ENCODE measurements at regions of chr3 and their contacts with region 1.

Region 1: GRCh38 chr3:196192036-196192523 is 19.1 kb downstream of the ZDHHC19 start:
- DNase-seq: peak in 1 of 5 donors; percentile 62
- ATAC-seq: no peak
- H3K4me3 ChIP-seq: no peak overlapping the region
- H3K27ac ChIP-seq: peak overlapping the region in 10 of 12 donors; percentile 24 to 93 (median 77)
- H3K4me1 ChIP-seq: peaks cover 0 to 41% (median 12%) of the 10 kb centered on the region in 12 donors
- H3K27me3 ChIP-seq: no peaks in the 10 kb centered on the region
- CTCF ChIP-seq: no peak
- POLR2A ChIP-seq: no peak

Region 2: DNA sequence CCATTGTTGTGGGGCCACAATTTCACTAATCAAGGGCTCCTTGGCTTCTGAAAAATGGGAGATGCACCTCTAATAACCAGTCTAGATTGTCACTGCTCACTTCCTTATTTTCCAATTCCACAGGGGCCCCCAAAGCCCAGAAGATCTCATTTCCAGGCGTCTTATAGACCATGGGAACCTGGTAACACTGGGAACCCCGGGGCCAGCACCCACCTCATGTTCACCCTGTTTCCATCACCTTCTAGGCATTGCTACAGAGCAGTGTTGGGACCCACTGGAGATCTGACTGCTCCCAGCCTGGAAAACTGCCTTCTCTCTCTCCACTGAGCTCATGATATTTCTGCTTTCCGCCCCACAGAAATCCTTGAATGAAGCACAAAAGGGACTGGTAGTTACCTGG is 171.7 kb before region 1 on chr3:
- intact Hi-C with region 1: loop called in 3 of 10 experiments (anchors 5 to 10 kb)
- DNase-seq: no peak
- ATAC-seq: no peak
- H3K4me3 ChIP-seq: no peak overlapping the region
- H3K27ac ChIP-seq: no peak overlapping the region
- H3K4me1 ChIP-seq: no peaks in the 10 kb centered on the region
- H3K27me3 ChIP-seq: no peaks in the 10 kb centered on the region
- CTCF ChIP-seq: no peak
- POLR2A ChIP-seq: no peak

Region 3: DNA sequence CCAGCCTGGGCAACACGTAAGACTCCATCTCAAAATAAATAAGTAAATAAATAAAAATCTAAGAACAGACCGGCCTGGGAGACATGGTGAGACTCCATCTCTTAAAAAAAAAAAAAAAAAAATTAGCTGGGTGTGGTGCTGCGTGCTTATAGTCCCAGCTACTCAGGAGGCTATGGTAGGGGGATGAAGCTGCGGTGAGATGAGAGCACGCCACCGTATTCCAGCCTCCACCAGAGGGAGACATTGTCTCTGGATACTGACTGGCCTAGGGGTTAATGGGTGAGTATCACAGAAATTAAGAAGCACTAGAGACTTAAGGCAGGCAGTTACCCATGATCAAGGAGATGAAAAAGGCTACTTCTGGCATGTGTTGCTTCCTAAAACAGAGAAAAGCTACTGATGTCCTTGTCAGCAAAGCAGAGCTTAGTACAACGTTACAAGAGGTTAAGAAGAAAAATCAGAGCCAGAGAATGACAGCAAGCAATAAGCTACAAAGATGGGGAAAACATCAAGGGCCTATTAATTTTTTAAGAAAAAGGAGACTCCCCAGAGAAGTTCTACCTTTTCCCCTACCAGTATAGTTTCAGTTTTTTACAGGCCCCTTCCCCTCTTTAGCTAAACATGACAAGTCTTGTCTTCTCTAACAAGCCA is 118.8 kb before region 1 on chr3:
- intact Hi-C with region 1: loop called (anchors 1 to 5 kb)
- DNase-seq: peak in 3 of 5 donors; percentile 47 to 60 (median 49)
- ATAC-seq: peak; percentile 80 to 94 (median 90)
- H3K4me3 ChIP-seq: no peak overlapping the region
- H3K27ac ChIP-seq: no peak overlapping the region
- H3K4me1 ChIP-seq: peaks cover 0 to 23% (median 0%) of the 10 kb centered on the region in 12 donors
- H3K27me3 ChIP-seq: no peaks in the 10 kb centered on the region
- CTCF ChIP-seq: peak; percentile 48 to 77 (median 75)
- POLR2A ChIP-seq: no peak

Region 4: DNA sequence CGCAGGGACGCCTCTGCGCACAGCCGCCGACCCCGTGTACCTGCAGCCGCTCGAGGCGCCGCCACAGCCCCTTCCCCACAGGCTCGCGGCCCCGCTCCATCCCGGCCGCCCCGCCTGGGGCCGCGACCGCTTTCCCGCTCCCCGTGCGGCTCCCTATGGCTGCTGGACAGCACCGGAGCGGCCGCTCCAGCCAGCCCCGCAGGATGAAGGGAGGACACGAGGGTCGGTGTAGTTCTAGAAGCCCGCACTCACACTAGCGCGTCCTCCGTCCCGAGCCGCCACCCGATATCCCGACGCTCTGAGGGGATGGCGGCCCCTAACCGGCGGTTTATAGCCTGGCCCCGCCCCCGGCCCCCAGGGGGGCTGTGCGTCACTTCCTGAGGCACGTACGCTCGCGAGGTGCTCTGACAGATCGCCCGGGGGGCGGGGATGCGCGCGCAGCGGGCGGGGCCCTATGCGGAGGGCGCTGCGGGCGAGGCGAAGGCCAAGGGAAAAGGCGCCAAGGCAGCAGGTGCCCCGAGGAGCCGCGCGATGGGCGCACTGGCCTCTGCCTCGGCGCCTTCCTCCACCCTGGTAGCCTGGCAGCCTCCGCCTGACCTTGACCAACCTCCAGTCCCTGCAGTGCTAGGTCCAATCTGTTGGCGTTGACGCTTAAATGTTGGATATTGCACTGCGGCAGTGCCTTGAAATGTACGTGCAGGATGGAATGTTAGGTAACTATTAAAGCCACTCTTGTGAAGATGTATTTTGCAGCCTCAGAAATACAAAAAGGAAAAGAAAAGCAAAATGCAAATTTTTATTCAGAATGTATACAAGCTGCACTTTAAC is 110.1 kb before region 1 on chr3 and contains the start of gene TFRC:
- intact Hi-C with region 1: loop called in 1 of 10 experiments (anchors 2 kb)
- DNase-seq: peak; percentile 94 to 98 (median 96)
- ATAC-seq: peak; percentile 97 to 99 (median 99)
- H3K4me3 ChIP-seq: peak within 1 kb of the TSS; percentile 78 to 98 (median 87)
- H3K27ac ChIP-seq: peak within 1 kb of the TSS; percentile 45 to 98 (median 94)
- H3K4me1 ChIP-seq: peaks cover 2 to 37% (median 21%) of the 10 kb centered on the region in 12 donors
- H3K27me3 ChIP-seq: no peaks in the 10 kb centered on the region
- CTCF ChIP-seq: peak in 1 of 12 donors; percentile 18
- POLR2A ChIP-seq: peak; percentile 92 to 99
- total RNA-seq, gene TFRC: 15.7 to 232 (median 121) TPM

Measured in heart left ventricle (tissue), 16 donors.